ENCODE measurements at regions of chr1 and their contacts with region 1.

Region 1: DNA sequence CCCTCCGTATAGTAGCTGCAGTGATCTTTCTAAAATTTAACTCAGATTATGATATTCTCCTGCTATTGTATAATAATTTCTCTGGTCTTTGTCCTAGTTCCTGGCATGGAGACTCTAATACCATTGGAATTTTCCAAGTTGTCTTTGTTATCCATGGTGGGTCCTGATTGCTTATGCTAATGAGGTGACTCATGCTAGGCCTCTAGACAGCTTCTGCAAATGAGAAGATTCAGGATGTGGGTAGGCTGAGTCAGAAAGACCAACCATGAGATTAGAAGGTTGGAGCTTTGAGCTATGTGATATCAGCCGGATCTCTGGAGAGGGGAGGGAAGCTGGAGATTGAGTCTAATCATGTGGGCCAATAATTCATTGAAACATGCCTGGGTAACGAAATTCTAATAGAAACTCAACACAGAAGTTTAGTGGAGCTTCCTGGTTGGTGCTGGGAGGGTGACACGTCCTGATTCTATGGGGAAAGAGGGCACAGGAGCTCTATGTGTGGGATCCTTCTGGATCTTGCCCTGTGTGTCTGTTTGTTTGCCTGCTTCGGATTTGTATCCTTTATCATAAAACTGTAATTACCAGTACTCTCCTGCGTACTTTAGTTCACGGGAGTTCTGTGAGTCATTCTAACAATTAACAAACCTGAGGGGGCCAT is 73.2 kb upstream of the CNIH3 start:
- H3K4me3 ChIP-seq: no peak overlapping the region
- H3K27ac ChIP-seq: peak overlapping the region; percentile 39; the same call in 1 of the 2 replicates
- H3K4me1 ChIP-seq: peaks cover 30% of the 10 kb centered on the region
- CTCF ChIP-seq: no peak

Region 2: GRCh38 chr1:224434691-224435317 is 108.1 kb before region 1 on chr1 and contains the start of gene WDR26:
- CTCF ChIA-PET with region 1: no interaction called
- POLR2A ChIA-PET with region 1: no interaction called
- H3K4me3 ChIP-seq: peak within 1 kb of the TSS; percentile 96
- H3K27ac ChIP-seq: peak within 1 kb of the TSS; percentile 76; the same call in 1 of the 2 replicates
- H3K4me1 ChIP-seq: peaks cover 30% of the 10 kb centered on the region
- CTCF ChIP-seq: peak; percentile 96

Region 3: GRCh38 chr1:224521904-224522734 is 20.8 kb before region 1 on chr1:
- CTCF ChIA-PET with region 1: interaction called, 12 read pairs
- POLR2A ChIA-PET with region 1: no interaction called
- H3K4me3 ChIP-seq: no peak overlapping the region
- H3K27ac ChIP-seq: no peak overlapping the region
- H3K4me1 ChIP-seq: no peaks in the 10 kb centered on the region; the same call in 1 of the 2 replicates
- CTCF ChIP-seq: 0 out of 2 replicates have a peak, but pooled peaks have one; percentile 24